H1 (cell line): ENCODE measurements at regions of chr1 and their contacts with region 1.

Region 1: GRCh38 chr1:201999625-202000238 is 10.7 kb upstream of the ELF3 start:
- DNase-seq: no peak
- H3K4me3 ChIP-seq: no peak overlapping the region
- H3K27ac ChIP-seq: no peak overlapping the region
- H3K4me1 ChIP-seq: no peaks in the 10 kb centered on the region
- H3K27me3 ChIP-seq: no peaks in the 10 kb centered on the region
- CTCF ChIP-seq: peak; percentile 49 to 93 (median 91)
- EP300 ChIP-seq: no peak
- POLR2A ChIP-seq: peak in 1 of 2 experiments; percentile 60; a peak in 2 of 3 replicates
- RAD21 ChIP-seq: peak; percentile 79 to 83

Region 2: DNA sequence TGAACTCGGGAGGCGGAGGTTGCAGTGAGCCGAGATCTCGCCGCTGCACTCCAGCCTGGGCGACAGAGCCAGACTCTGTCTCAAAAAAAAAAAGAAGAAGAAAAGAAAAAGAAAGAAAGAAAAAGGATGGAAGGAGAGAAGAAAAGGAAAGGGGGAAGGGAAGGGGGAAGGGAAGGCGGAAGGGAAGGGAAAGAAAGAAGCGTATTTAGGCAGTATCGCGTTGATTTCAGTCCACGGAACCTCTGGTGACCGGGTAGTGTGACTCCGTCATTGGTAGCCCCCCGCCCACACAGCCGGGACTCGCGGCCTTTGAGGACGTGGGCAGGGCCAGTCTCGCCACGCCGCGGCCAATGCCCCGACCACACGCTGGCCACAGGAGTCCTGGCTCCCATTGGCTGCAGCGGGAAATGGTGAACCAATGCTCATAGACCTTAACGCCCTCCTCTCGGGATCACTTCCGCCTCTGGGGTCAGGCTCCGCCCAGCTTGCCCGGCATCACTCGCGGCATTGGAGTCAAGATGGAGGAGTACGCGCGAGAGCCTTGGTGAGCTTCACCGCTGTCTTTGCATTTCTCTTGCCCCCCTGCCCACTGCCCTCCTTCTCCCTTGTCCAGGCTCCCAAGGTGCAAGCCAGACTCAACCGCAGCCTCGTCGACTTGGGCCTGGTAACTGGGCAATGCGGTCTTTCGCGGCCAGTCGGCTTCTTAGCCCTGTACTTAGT is 44.6 kb before region 1 on chr1 and contains the start of gene TIMM17A:
- CTCF ChIA-PET with region 1: interaction called, 14 read pairs
- POLR2A ChIA-PET with region 1: interaction called, 3 read pairs
- DNase-seq: peak; percentile 77 to 93
- H3K4me3 ChIP-seq: peak within 1 kb of the TSS; percentile 83 to 100 (median 94)
- H3K27ac ChIP-seq: peak within 1 kb of the TSS; percentile 90
- H3K4me1 ChIP-seq: peaks cover 0 to 3% (median 0%) of the 10 kb centered on the region in 4 experiments; a peak in 1 of 7 replicates
- H3K27me3 ChIP-seq: no peaks in the 10 kb centered on the region
- CTCF ChIP-seq: no peak
- EP300 ChIP-seq: no peak
- POLR2A ChIP-seq: peak in 1 of 2 experiments; percentile 91
- RAD21 ChIP-seq: no peak; a peak in 1 of 4 replicates
- total RNA-seq, gene TIMM17A: 54.3 and 57.1 TPM in 2 replicates

Region 3: DNA sequence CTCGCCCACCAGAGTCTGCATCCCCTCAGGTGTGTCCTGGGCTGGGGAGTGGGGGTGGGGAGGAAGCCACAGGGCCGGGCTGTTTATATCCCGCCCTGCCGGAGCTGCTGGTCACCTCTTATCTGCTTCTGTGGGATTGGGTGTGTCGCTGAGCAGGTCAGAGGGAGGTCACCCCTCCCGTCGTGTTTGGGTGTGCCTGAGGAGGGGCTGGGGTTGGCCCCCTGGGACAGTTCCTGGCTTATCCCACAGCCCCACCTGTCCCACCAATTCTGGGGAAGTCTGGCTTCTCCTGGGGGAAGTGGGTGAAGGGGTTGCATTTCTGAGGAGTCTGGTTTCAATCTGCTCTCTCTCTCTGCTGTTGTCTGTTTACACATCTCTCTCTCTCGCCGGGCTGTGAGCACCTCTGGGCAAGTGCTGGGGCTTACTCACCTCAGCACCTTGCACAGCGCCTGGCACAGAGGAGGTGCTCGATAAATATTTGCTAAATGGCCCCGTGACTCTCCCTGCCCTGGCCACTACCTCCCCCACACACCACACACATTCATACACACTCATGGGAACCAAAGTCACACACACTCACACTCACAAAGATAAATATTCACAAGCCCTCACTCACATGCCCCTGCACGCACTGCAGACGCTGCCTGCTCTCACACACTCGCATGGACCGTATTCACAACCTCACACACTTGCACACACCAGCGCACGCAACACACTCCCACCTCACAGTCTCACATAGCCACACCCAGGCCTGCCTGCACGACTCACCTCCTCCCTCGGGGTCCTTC is 18.9 kb after region 1 on chr1:
- CTCF ChIA-PET with region 1: interaction called, 15 read pairs
- POLR2A ChIA-PET with region 1: interaction called, 6 read pairs
- DNase-seq: no peak
- H3K4me3 ChIP-seq: no peak overlapping the region
- H3K27ac ChIP-seq: no peak overlapping the region
- H3K4me1 ChIP-seq: peaks cover 0 to 13% (median 2%) of the 10 kb centered on the region in 4 experiments; a peak in 5 of 7 replicates
- H3K27me3 ChIP-seq: no peaks in the 10 kb centered on the region
- CTCF ChIP-seq: no peak
- EP300 ChIP-seq: no peak
- POLR2A ChIP-seq: no peak
- RAD21 ChIP-seq: no peak

Region 4: DNA sequence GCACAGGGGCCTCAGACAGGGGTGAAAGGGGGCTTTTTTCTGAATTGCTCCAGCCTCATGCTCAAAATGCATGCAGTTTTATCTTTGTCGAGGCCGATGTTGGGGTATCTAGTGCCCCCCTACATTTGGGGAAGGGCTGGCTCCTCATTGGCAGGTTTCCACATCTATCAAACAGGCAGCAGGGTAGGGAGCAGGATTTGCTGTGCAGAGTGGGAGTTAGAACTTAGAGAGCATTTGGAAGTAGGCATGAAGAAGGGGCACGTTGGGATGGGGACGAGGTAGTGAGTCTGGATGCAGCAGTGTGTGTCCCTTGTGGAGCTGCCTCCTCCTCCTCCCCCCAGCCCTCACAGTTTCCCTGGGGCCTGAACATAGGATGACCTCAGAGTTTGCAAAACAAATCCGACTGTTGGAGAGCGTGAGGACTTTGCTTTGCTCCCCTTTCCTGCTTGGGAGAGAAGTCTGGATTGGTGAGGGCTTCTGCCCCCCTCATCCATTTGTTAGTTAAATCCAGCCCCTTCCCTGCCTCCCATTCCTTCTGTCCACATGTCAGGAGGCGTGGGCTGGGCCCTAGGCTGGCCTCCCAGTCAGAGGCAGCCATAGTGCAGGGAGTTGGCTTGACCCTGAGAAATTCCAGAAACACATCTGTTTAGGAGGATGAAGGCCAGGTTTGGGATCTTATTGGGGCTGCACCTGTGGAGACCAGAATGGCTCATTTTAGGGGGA is 86.1 kb after region 1 on chr1:
- CTCF ChIA-PET with region 1: interaction called, 11 read pairs
- POLR2A ChIA-PET with region 1: no interaction called
- DNase-seq: peak in 1 of 2 experiments; percentile 56
- H3K4me3 ChIP-seq: peak overlapping the region in 1 of 4 experiments; percentile 35; a peak in 1 of 8 replicates
- H3K27ac ChIP-seq: peak overlapping the region; percentile 68; the same call in 1 of the 2 replicates
- H3K4me1 ChIP-seq: peaks cover 17 to 29% (median 20%) of the 10 kb centered on the region in 4 experiments
- H3K27me3 ChIP-seq: no peaks in the 10 kb centered on the region
- CTCF ChIP-seq: no peak
- EP300 ChIP-seq: no peak
- POLR2A ChIP-seq: no peak
- RAD21 ChIP-seq: no peak

Region 5: GRCh38 chr1:202105539-202106276 is 106.0 kb after region 1 on chr1:
- CTCF ChIA-PET with region 1: interaction called, 1,014 read pairs
- POLR2A ChIA-PET with region 1: interaction called, 3 read pairs
- DNase-seq: peak; percentile 58 to 90
- H3K4me3 ChIP-seq: peak overlapping the region in 1 of 4 experiments; percentile 33; a peak in 1 of 8 replicates
- H3K27ac ChIP-seq: peak overlapping the region; percentile 70; the same call in 1 of the 2 replicates
- H3K4me1 ChIP-seq: peaks cover 19 to 32% (median 20%) of the 10 kb centered on the region in 4 experiments
- H3K27me3 ChIP-seq: no peaks in the 10 kb centered on the region
- CTCF ChIP-seq: no peak
- EP300 ChIP-seq: no peak
- POLR2A ChIP-seq: no peak
- RAD21 ChIP-seq: no peak